ENCODE measurements at regions of chr9 and their contacts with region 1.

Region 1: GRCh38 chr9:37430841-37431597 is 8.5 kb downstream of the GRHPR start:
- DNase-seq: peak in 2 of 6 donors; percentile 24 to 51
- ATAC-seq: peak; percentile 44 to 68 (median 64)
- H3K4me3 ChIP-seq: no peak overlapping the region
- H3K27ac ChIP-seq: no peak overlapping the region
- H3K4me1 ChIP-seq: no peaks in the 10 kb centered on the region
- H3K27me3 ChIP-seq: no peaks in the 10 kb centered on the region
- CTCF ChIP-seq: no peak

Region 2: GRCh38 chr9:37079370-37080164 is 351.5 kb before region 1 on chr9:
- intact Hi-C with region 1: no loop called
- DNase-seq: peak; percentile 90 to 97 (median 94)
- ATAC-seq: peak; percentile 95 to 98 (median 96)
- H3K4me3 ChIP-seq: peak overlapping the region; percentile 75 to 95 (median 86)
- H3K27ac ChIP-seq: peak overlapping the region; percentile 83 to 89 (median 87)
- H3K4me1 ChIP-seq: peaks cover 6 to 17% (median 15%) of the 10 kb centered on the region in 3 donors
- H3K27me3 ChIP-seq: no peaks in the 10 kb centered on the region
- CTCF ChIP-seq: no peak

Region 3: DNA sequence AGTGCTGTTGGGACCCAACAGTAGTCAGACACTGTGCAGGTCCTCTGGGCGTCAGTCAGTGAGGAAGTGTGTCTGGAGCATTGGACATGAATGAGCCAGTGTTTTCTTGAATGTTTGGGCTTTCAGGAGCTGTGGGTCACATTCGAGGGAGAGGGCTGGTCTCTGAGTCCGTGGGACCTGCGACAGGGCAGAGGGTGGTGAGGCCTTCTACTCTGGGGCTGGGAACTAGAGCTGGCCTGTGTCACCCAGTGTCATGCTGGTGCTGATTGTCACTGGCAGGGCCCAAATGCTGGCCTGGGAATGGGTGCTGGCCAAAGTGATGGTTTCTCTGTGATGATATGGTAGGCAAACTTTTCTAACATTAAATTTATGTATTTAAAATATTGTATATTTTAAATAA is 65.0 kb after region 1 on chr9:
- intact Hi-C with region 1: loop called in 1 of 3 experiments (anchors 10 kb)
- DNase-seq: no peak
- ATAC-seq: no peak
- H3K4me3 ChIP-seq: no peak overlapping the region
- H3K27ac ChIP-seq: no peak overlapping the region
- H3K4me1 ChIP-seq: no peaks in the 10 kb centered on the region
- H3K27me3 ChIP-seq: no peaks in the 10 kb centered on the region
- CTCF ChIP-seq: no peak

Region 4: GRCh38 chr9:37678789-37679273 is 247.8 kb after region 1 on chr9:
- intact Hi-C with region 1: no loop called
- DNase-seq: no peak
- ATAC-seq: no peak
- H3K4me3 ChIP-seq: no peak overlapping the region
- H3K27ac ChIP-seq: no peak overlapping the region
- H3K4me1 ChIP-seq: no peaks in the 10 kb centered on the region
- H3K27me3 ChIP-seq: no peaks in the 10 kb centered on the region
- CTCF ChIP-seq: no peak

Region 5: DNA sequence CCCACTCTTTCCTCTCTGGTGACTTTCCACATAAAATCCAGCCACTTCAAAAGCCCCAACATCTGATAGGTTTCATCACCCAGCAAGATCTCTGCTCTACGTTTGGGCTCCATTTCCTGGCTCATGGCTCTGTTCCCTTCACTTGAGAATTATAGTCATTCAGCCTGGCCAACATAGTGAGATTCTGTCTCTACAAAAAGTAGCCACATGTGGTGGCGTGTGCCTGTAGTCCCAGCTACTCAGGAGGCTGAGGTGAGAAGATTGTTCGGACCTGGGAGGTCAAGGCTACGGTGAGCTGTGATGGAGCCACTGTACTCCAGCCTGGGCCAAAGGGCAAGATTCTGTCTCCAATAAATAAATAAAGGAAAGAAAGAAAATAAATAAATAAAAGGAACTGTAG is 1076.6 kb after region 1 on chr9:
- intact Hi-C with region 1: no loop called
- DNase-seq: no peak
- ATAC-seq: no peak
- H3K4me3 ChIP-seq: no peak overlapping the region
- H3K27ac ChIP-seq: no peak overlapping the region
- H3K4me1 ChIP-seq: no peaks in the 10 kb centered on the region
- H3K27me3 ChIP-seq: no peaks in the 10 kb centered on the region
- CTCF ChIP-seq: no peak

Measured in pancreas (tissue), 10 donors.